GM18951 (cell line): ENCODE measurements at regions of chr1 and their contacts with region 1.

Region 1: GRCh38 chr1:220680085-220680687 is 10.0 kb upstream of the C1orf115 start:
- POLR2A ChIP-seq: no peak

Region 2: DNA sequence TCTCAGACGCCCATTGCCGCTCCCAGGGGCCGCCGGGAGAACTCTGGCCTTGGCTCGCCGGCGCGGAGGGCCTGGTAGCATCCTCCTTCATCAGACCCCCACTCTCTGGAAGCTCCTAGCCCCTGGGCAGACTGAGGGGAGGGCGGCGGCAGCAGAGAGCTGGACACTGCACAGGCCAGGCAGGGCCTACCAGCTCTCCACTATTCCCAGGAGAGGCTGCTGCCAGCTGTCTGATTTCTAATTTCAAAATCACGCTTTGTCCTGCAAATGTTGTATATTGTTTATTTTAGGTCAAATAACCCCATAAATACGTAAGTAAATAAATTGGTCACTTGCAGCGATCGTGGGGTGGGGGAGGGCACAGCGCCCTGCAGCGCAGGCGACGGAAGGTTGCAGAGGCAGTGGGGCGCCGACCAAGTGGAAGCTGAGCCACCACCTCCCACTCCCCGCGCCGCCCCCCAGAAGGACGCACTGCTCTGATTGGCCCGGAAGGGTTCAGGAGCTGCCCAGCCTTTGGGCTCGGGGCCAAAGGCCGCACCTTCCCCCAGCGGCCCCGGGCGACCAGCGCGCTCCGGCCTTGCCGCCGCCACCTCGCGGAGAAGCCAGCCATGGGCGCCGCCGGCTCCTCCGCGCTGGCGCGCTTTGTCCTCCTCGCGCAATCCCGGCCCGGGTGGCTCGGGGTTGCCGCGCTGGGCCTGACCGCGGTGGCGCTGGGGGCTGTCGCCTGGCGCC is 106.3 kb after region 1 on chr1 and contains the start of gene MTARC1:
- in situ Hi-C with region 1: loop called (anchors 10 kb)
- POLR2A ChIP-seq: no peak

Region 3: GRCh38 chr1:221268295-221268694 is 588.1 kb after region 1 on chr1:
- in situ Hi-C with region 1: no loop called
- POLR2A ChIP-seq: no peak